Caco-2 (cell line): ENCODE measurements at regions of chr11 and their contacts with region 1.

Region 1: DNA sequence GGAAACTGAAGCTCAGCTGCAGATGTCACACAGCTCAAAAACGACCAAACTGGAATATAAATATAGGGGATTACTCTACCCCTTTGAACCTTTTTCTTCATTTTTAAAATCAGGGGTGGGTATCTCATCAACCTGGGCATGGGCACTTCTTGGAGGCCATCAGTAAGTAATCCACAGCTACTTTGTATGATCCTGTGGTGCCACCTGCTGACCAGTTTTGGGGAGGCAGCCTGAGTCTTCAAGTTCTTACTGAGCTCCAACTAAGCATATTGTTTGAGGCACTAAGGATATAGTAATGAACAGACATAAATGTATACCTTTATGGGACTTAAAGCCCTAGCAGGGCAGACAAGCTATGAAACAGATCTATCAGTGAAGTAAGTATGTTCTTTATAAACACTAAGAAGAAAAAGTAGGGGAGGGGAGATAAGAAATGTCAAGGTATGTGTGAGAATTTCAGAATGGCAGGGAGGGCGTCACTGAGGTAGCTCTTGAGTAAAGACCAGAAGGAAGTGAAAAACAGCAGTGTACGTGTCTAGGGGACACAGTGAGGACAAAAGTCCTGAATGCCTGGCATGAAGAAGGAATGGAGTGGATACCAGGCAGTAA is 18.4 kb downstream of the TUB start:
- DNase-seq: peak; percentile 78 to 80
- H3K4me3 ChIP-seq: no peak overlapping the region
- H3K4me3 Mint-ChIP-seq: no peak overlapping the region
- H3K27ac Mint-ChIP-seq: no peak overlapping the region
- H3K4me1 ChIP-seq: no peaks in the 10 kb centered on the region
- H3K4me1 Mint-ChIP-seq: no peaks in the 10 kb centered on the region
- H3K27me3 ChIP-seq: no peaks in the 10 kb centered on the region
- H3K27me3 Mint-ChIP-seq: peaks cover 9% of the 10 kb centered on the region
- CTCF ChIP-seq: peak; percentile 79 to 88

Region 2: GRCh38 chr11:6705905-6706535 is 1393.4 kb before region 1 on chr11:
- CTCF ChIA-PET with region 1: no interaction called
- POLR2A ChIA-PET with region 1: no interaction called
- intact Hi-C with region 1: no loop called
- DNase-seq: peak in 1 of 2 experiments; percentile 60
- H3K4me3 ChIP-seq: no peak overlapping the region
- H3K4me3 Mint-ChIP-seq: no peak overlapping the region
- H3K27ac Mint-ChIP-seq: no peak overlapping the region
- H3K4me1 ChIP-seq: no peaks in the 10 kb centered on the region
- H3K4me1 Mint-ChIP-seq: peaks cover 7% of the 10 kb centered on the region
- H3K27me3 ChIP-seq: no peaks in the 10 kb centered on the region
- H3K27me3 Mint-ChIP-seq: peaks cover 2% of the 10 kb centered on the region
- CTCF ChIP-seq: peak; percentile 91 to 92

Region 3: DNA sequence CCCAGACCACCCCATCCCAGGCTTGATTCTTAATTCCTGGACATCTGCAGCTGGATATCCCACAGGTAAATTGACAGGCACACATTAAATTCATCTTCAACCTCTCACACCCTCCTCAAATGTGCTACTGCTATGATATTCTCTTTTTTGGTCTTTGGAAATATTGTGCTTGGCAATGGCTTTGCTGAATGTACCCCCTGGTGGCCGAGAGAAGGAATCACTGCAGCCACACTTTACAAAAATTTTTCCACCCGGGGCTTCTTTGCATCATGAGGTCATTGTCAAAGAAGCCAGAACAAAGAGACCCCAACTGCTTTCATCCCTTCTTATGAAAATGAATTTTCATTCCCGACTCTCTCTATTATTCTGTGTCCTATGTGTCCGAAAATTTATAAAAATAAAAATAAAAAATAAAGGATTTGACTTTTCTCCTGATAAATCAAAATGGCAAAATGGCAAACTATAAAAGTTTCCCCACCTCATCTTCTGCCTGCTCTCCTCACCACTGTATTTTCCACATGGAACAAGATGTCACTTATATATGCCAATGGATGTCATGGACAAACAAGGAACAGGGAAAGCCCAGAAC is 411.1 kb before region 1 on chr11:
- CTCF ChIA-PET with region 1: no interaction called
- POLR2A ChIA-PET with region 1: no interaction called
- intact Hi-C with region 1: loop called (anchors 10 kb)
- DNase-seq: peak in 1 of 2 experiments; percentile 49
- H3K4me3 ChIP-seq: no peak overlapping the region
- H3K4me3 Mint-ChIP-seq: no peak overlapping the region
- H3K27ac Mint-ChIP-seq: no peak overlapping the region
- H3K4me1 ChIP-seq: peaks cover 15% of the 10 kb centered on the region
- H3K4me1 Mint-ChIP-seq: peaks cover 20% of the 10 kb centered on the region
- H3K27me3 ChIP-seq: no peaks in the 10 kb centered on the region
- H3K27me3 Mint-ChIP-seq: no peaks in the 10 kb centered on the region
- CTCF ChIP-seq: peak; percentile 83 to 91

Region 4: GRCh38 chr11:7892840-7893254 is 206.5 kb before region 1 on chr11:
- CTCF ChIA-PET with region 1: no interaction called
- POLR2A ChIA-PET with region 1: no interaction called
- intact Hi-C with region 1: loop called (anchors 1 kb)
- DNase-seq: peak in 1 of 2 experiments; percentile 50
- H3K4me3 ChIP-seq: no peak overlapping the region
- H3K4me3 Mint-ChIP-seq: no peak overlapping the region
- H3K27ac Mint-ChIP-seq: no peak overlapping the region
- H3K4me1 ChIP-seq: peaks cover 9% of the 10 kb centered on the region; the same call in 1 of the 2 replicates
- H3K4me1 Mint-ChIP-seq: no peaks in the 10 kb centered on the region
- H3K27me3 ChIP-seq: no peaks in the 10 kb centered on the region
- H3K27me3 Mint-ChIP-seq: peaks cover 3% of the 10 kb centered on the region
- CTCF ChIP-seq: peak; percentile 65 to 77

Region 5: DNA sequence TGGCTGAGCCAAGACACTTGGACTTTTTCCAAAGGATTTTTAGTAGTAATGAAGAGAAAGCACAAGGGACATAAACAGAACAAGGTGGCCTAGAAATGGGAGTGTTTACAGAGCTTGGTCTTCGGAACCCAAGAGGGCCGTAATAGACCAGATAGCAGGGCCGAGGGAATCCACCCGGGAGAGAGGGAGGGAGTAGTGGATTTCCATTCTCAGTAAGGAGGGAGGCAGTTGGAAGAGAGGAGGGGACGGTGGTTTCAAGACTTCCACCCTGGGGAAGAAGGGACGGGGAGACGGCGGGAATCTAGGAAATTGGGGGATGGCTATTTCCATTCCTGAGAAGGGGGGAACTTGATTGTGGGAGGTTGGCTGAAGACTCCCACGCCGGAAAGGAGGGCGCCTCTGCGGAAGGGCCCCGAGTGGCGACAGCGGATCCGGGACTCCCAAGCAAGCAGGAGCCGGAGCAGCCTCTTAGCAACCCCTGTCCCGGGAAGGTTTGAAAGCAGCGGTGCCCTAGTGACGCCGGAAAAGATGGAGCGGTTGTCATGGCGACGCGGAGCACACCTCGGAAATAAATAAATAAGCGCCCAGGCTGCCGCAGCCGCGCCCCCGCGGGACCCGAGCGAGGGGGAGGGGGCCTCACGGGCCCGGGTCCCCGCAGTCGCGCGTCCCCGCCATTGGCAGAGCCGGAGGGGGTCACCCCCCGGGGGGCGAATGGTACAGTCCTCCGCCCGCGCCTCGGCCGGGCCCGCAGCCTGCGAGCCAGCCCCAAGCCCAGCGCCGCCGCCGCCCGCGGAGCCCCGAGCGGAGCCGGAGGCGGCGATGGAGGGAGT is 80.7 kb before region 1 on chr11:
- CTCF ChIA-PET with region 1: interaction called, 17 read pairs
- POLR2A ChIA-PET with region 1: no interaction called
- intact Hi-C with region 1: no loop called
- DNase-seq: no peak
- H3K4me3 ChIP-seq: no peak overlapping the region
- H3K4me3 Mint-ChIP-seq: no peak overlapping the region
- H3K27ac Mint-ChIP-seq: no peak overlapping the region
- H3K4me1 ChIP-seq: no peaks in the 10 kb centered on the region
- H3K4me1 Mint-ChIP-seq: no peaks in the 10 kb centered on the region
- H3K27me3 ChIP-seq: no peaks in the 10 kb centered on the region
- H3K27me3 Mint-ChIP-seq: peaks cover 2% of the 10 kb centered on the region
- CTCF ChIP-seq: no peak

Region 6: GRCh38 chr11:8033305-8034105 is 65.9 kb before region 1 on chr11:
- CTCF ChIA-PET with region 1: interaction called, 103 read pairs
- POLR2A ChIA-PET with region 1: no interaction called
- intact Hi-C with region 1: loop called (anchors 1 kb)
- DNase-seq: peak; percentile 60 to 69
- H3K4me3 ChIP-seq: no peak overlapping the region
- H3K4me3 Mint-ChIP-seq: peak overlapping the region; percentile 16
- H3K27ac Mint-ChIP-seq: no peak overlapping the region
- H3K4me1 ChIP-seq: no peaks in the 10 kb centered on the region
- H3K4me1 Mint-ChIP-seq: no peaks in the 10 kb centered on the region
- H3K27me3 ChIP-seq: no peaks in the 10 kb centered on the region
- H3K27me3 Mint-ChIP-seq: peaks cover 21% of the 10 kb centered on the region
- CTCF ChIP-seq: peak; percentile 80 to 94

Region 7: GRCh38 chr11:8110396-8110795 is 11.0 kb after region 1 on chr11:
- CTCF ChIA-PET with region 1: interaction called, 19 read pairs
- POLR2A ChIA-PET with region 1: no interaction called
- intact Hi-C with region 1: no loop called
- DNase-seq: no peak
- H3K4me3 ChIP-seq: no peak overlapping the region
- H3K4me3 Mint-ChIP-seq: no peak overlapping the region
- H3K27ac Mint-ChIP-seq: no peak overlapping the region
- H3K4me1 ChIP-seq: no peaks in the 10 kb centered on the region
- H3K4me1 Mint-ChIP-seq: no peaks in the 10 kb centered on the region
- H3K27me3 ChIP-seq: peaks cover 2% of the 10 kb centered on the region; the same call in 1 of the 2 replicates
- H3K27me3 Mint-ChIP-seq: peaks cover 6% of the 10 kb centered on the region
- CTCF ChIP-seq: no peak